Posterior cingulate gyrus (tissue), 11 donors: ENCODE measurements at regions of chr18 and their contacts with region 1.

Region 1: GRCh38 chr18:63237881-63238667 is 81.5 kb downstream of the BCL2 start:
- DNase-seq: no peak

Region 2: DNA sequence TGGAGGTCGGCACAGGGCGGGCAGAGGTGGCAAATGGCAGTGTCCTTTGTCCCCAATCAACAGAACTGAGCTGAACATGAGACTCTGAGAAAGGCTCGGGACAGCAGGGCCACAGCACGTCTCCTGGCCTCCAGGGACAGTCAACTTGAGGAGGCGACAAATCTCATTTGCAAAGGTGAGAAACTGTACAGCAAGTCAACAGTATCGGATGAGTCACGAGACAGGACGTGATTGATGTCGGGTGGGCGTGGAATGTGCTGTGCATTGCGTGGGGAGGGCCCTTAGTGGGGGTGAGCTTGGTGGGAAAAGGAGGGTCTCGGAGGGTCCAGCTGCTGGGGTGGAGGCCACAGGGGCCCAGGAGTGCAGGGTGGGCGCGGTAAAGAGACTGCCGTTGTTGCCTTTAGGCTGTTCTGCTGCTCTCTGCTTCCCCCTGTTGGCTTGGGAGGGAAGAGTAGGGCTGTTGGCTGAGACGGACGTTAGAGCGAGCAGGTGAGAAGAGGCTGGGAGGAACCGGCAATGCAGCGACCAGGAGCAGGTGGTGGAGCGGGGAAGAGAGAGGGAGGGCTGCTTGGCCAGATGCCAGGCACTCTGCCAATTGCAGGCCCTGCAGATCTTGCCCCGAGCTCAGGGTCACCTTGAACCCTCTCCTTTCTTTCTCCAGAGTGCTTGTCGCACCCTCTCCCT is 82.8 kb before region 1 on chr18:
- intact Hi-C with region 1: loop called (anchors 10 kb)
- DNase-seq: peak in 4 of 10 donors; percentile 34 to 58 (median 42)